ENCODE measurements at regions of chr12 and their contacts with region 1.

Region 1: DNA sequence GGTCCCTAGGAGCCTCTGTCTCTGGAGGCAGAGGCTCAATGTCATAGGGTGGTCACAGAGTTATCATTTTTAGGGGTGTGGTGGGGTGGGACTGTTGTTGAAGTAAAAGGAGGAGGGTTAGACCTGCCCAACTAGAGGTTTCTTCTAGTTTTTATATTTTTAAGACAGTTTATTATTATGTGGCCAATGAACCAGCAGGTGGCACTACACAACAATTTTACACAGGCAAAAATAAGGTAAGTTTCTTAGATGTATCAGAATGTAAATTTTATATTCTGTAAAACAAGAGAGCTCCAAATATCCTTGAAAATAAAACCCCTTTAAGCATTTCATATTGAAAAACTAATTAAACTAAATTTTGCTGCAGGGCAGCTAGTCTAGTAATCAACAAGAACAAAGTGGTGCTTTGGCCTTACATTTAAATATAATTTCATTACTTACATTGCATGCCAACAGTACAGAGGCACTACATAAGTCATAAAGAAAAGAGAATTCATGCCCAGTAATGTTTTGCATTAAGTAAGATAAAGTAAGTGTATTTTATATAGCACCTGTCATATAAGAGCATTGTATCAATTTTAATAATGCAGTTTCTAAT is 22.2 kb upstream of the OVCH1 start:
- DNase-seq: peak; percentile 24
- H3K4me3 ChIP-seq: no peak overlapping the region
- H3K27ac ChIP-seq: no peak overlapping the region
- H3K4me1 ChIP-seq: no peaks in the 10 kb centered on the region
- H3K27me3 ChIP-seq: no peaks in the 10 kb centered on the region
- CTCF ChIP-seq: peak; percentile 31 to 54

Region 2: GRCh38 chr12:29309320-29309902 is 210.3 kb before region 1 on chr12:
- CTCF ChIA-PET with region 1: no interaction called
- dilution Hi-C with region 1: no loop called
- in situ Hi-C with region 1: no loop called
- intact Hi-C with region 1: loop called (anchors 1 kb)
- DNase-seq: no peak
- H3K4me3 ChIP-seq: no peak overlapping the region
- H3K27ac ChIP-seq: no peak overlapping the region
- H3K4me1 ChIP-seq: no peaks in the 10 kb centered on the region
- H3K27me3 ChIP-seq: no peaks in the 10 kb centered on the region
- CTCF ChIP-seq: peak; percentile 33 to 43

Region 3: GRCh38 chr12:29380536-29381523 is 138.9 kb before region 1 on chr12 and contains the start of gene ERGIC2:
- CTCF ChIA-PET with region 1: no interaction called
- dilution Hi-C with region 1: no loop called
- in situ Hi-C with region 1: no loop called
- intact Hi-C with region 1: loop called (anchors 5 kb)
- DNase-seq: peak; percentile 99
- H3K4me3 ChIP-seq: peak within 1 kb of the TSS; percentile 82 to 95 (median 83)
- H3K27ac ChIP-seq: peak within 1 kb of the TSS; percentile 97
- H3K4me1 ChIP-seq: no peaks in the 10 kb centered on the region
- H3K27me3 ChIP-seq: no peaks in the 10 kb centered on the region
- CTCF ChIP-seq: no peak
- total RNA-seq, gene ERGIC2: 51.7 to 81.8 TPM

Region 4: DNA sequence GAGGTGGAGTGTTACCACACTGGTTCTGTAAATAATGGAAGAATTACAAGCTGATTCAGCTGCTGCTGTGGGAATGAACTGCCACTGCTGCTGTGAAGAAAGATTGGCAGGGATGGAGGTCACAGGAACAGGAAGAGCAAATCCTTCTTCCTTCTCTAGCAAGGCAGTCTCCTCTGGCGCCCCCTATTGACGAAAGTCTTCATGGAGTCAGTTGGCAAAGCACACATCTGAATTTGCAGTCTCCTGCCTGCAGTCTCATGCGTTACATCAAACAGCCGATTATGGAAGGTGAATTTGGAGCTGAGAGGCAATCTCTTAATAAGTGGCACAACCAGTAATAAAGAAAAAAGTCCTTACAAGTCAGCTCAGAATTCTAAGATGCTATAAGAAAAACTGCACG is 370.1 kb after region 1 on chr12:
- CTCF ChIA-PET with region 1: no interaction called
- dilution Hi-C with region 1: no loop called
- in situ Hi-C with region 1: no loop called
- intact Hi-C with region 1: loop called (anchors 2 kb)
- DNase-seq: peak; percentile 52
- H3K4me3 ChIP-seq: no peak overlapping the region
- H3K27ac ChIP-seq: no peak overlapping the region
- H3K4me1 ChIP-seq: no peaks in the 10 kb centered on the region
- H3K27me3 ChIP-seq: no peaks in the 10 kb centered on the region
- CTCF ChIP-seq: peak; percentile 61 to 82

Region 5: DNA sequence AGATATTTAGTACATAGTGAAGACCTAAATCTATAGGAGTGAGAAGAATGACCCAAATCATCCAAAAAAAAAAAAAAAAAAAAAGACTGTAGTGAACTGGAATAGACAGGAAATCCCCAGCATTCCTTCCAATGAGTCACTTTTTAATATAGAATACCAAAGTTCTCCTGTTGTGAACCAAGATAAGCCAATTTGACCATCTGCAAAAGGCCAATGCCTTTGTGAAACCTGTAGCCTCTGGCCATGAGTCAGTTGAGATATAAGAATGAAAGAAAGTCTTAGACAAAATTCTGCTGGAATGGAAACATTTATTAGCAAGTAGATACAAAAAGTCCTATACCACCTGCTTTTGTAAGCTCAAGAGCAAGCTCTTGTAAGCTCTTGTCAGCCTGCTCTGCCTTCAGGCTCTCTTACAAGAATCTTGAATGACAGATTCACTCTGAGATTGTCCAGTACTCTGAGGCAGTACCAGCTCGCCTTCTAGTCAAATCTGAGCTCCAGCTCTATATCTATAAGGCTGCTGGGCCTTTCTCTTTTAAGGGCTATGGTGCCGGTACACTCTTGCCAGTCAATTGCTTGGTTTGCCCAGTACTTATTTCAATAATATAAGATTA is 507.0 kb after region 1 on chr12:
- CTCF ChIA-PET with region 1: interaction called, 12 read pairs
- dilution Hi-C with region 1: no loop called
- in situ Hi-C with region 1: no loop called
- intact Hi-C with region 1: no loop called
- DNase-seq: peak; percentile 72
- H3K4me3 ChIP-seq: no peak overlapping the region
- H3K27ac ChIP-seq: no peak overlapping the region
- H3K4me1 ChIP-seq: peaks cover 16% of the 10 kb centered on the region
- H3K27me3 ChIP-seq: no peaks in the 10 kb centered on the region
- CTCF ChIP-seq: no peak

Region 6: GRCh38 chr12:30286345-30286926 is 766.8 kb after region 1 on chr12:
- CTCF ChIA-PET with region 1: no interaction called
- dilution Hi-C with region 1: no loop called
- in situ Hi-C with region 1: no loop called
- intact Hi-C with region 1: loop called (anchors 1 kb)
- DNase-seq: peak; percentile 16
- H3K4me3 ChIP-seq: no peak overlapping the region
- H3K27ac ChIP-seq: no peak overlapping the region
- H3K4me1 ChIP-seq: no peaks in the 10 kb centered on the region
- H3K27me3 ChIP-seq: no peaks in the 10 kb centered on the region
- CTCF ChIP-seq: peak; percentile 69 to 75

Region 7: DNA sequence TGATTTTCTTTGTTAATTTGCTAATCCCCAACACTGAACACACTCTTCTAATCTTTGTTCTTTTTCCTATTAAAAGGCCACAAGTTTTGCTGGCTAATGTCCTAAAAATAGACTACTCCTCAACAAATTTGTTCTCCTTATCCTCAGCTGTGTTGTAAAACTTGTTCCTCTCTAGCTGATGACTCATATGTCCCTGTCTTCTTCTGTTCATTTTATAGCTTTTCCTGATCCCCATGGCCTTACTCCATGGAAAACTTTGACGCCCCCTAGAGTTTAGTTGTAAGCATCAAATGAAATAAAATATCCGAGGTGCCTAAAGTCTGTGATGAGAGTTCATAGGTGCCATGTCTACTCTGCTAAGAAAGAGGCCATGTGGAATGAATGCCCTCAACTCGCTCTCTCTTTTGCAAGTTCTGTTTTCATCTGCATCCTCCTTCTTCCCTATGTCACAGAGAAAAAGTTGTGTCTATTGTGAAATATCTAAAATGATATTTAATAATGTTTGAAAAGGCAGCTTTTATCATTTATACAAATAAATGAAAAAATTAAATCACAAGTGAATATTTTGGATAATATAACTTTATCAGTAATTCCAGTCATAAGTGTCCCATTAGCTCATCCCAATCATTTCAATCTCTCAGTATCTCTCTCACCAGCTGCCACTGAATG is 938.1 kb after region 1 on chr12:
- CTCF ChIA-PET with region 1: no interaction called
- dilution Hi-C with region 1: no loop called
- in situ Hi-C with region 1: no loop called
- intact Hi-C with region 1: loop called (anchors 5 kb)
- DNase-seq: peak; percentile 71
- H3K4me3 ChIP-seq: no peak overlapping the region
- H3K27ac ChIP-seq: no peak overlapping the region
- H3K4me1 ChIP-seq: peaks cover 7% of the 10 kb centered on the region
- H3K27me3 ChIP-seq: no peaks in the 10 kb centered on the region
- CTCF ChIP-seq: peak; percentile 51 to 63